ENCODE measurements at regions of chr7 and their contacts with region 1.

Region 1: GRCh38 chr7:32479574-32480200 is 10.5 kb downstream of the LSM5 start:
- DNase-seq: peak; percentile 56 to 72 (median 57)
- ATAC-seq: peak; percentile 53
- H3K4me3 ChIP-seq: no peak overlapping the region
- H3K27ac ChIP-seq: no peak overlapping the region
- H3K4me1 ChIP-seq: no peaks in the 10 kb centered on the region; a peak in 2 of 5 replicates
- H3K27me3 ChIP-seq: peaks cover 4 to 5% of the 10 kb centered on the region in 2 experiments; a peak in 2 of 5 replicates
- CTCF ChIP-seq: peak; percentile 86 to 98 (median 89)
- EP300 ChIP-seq: no peak
- POLR2A ChIP-seq: no peak
- RAD21 ChIP-seq: peak; percentile 83 to 93

Region 2: DNA sequence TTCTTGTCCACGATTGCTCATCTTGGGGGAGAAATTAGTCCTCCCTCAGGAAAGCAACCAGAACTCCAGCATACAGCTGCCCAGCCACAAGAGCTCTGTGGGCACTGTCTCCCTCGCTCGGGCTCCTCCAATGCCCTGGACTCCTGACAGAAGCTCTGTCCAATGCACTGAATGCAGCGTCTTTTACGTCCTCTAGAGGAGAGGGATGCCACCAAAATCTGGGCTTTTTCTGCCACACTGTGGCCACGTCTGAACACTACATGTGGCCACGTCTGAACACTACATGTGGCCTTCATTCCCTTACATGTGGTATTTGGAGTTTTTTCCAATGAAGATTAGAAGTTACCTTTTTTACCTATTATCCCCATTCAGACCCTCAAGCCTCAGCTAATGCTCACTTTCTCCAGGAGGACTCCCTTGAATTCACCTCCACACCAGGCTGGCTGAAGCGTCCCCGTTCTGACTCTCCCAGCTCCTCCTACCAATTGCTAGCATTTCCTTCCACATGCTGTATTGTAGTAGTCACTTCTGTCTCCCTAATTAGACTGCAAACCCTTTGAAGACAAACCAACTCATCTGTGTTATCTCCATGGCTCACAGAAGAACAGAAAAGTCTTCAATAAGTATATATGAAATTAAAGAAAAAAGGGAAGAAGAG is 275.2 kb before region 1 on chr7:
- CTCF ChIA-PET with region 1: interaction called, 20 read pairs
- POLR2A ChIA-PET with region 1: no interaction called
- in situ Hi-C with region 1: no loop called
- intact Hi-C with region 1: no loop called
- DNase-seq: peak in 1 of 4 experiments; percentile 34
- ATAC-seq: peak; percentile 84
- H3K4me3 ChIP-seq: no peak overlapping the region
- H3K27ac ChIP-seq: no peak overlapping the region
- H3K4me1 ChIP-seq: no peaks in the 10 kb centered on the region
- H3K27me3 ChIP-seq: no peaks in the 10 kb centered on the region
- CTCF ChIP-seq: peak; percentile 56 to 85 (median 62)
- EP300 ChIP-seq: no peak
- POLR2A ChIP-seq: no peak
- RAD21 ChIP-seq: peak; percentile 27 to 58; a peak in 3 of 4 replicates

Region 3: DNA sequence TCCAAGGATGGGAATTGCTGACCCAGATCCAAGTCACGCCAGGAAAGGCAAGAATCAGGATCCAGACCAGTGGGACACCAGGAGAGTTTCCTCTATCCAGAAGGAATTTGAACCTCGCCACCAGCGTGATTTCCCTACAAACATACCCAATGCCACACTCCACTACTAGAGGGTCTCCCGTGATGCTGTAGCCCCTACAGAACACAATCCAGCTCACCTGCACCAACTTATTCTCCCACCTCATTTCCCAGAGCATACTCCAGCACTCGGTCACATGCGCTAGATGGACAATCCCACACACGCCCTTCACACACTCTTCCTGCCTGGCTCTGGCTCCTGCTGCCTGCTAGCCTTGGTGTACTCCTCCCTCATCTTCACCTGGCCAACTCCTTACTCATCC is 267.4 kb before region 1 on chr7:
- CTCF ChIA-PET with region 1: interaction called, 20 read pairs
- POLR2A ChIA-PET with region 1: no interaction called
- in situ Hi-C with region 1: loop called (anchors 5 kb)
- intact Hi-C with region 1: loop called (anchors 1 kb)
- DNase-seq: no peak
- ATAC-seq: no peak
- H3K4me3 ChIP-seq: no peak overlapping the region
- H3K27ac ChIP-seq: no peak overlapping the region
- H3K4me1 ChIP-seq: no peaks in the 10 kb centered on the region
- H3K27me3 ChIP-seq: 0 out of 5 replicates have a peak, but pooled peaks cover 0 to 5% of the 10 kb centered on the region in 2 experiments
- CTCF ChIP-seq: no peak
- EP300 ChIP-seq: no peak
- POLR2A ChIP-seq: no peak
- RAD21 ChIP-seq: no peak

Region 4: GRCh38 chr7:32347244-32347828 is 132.4 kb before region 1 on chr7:
- CTCF ChIA-PET with region 1: interaction called, 5 read pairs
- POLR2A ChIA-PET with region 1: no interaction called
- in situ Hi-C with region 1: no loop called
- intact Hi-C with region 1: loop called (anchors 5 kb)
- DNase-seq: peak; percentile 41 to 47 (median 45)
- ATAC-seq: peak; percentile 72; the same call in 2 of the 3 replicates
- H3K4me3 ChIP-seq: no peak overlapping the region
- H3K27ac ChIP-seq: no peak overlapping the region
- H3K4me1 ChIP-seq: no peaks in the 10 kb centered on the region
- H3K27me3 ChIP-seq: no peaks in the 10 kb centered on the region
- CTCF ChIP-seq: peak; percentile 48 to 72 (median 70); a peak in 5 of 6 replicates
- EP300 ChIP-seq: no peak
- POLR2A ChIP-seq: no peak
- RAD21 ChIP-seq: peak; percentile 34 to 62; a peak in 3 of 4 replicates

Region 5: GRCh38 chr7:32390210-32390609 is 89.5 kb before region 1 on chr7:
- CTCF ChIA-PET with region 1: no interaction called
- POLR2A ChIA-PET with region 1: no interaction called
- in situ Hi-C with region 1: no loop called
- intact Hi-C with region 1: loop called (anchors 5 kb)
- DNase-seq: peak in 1 of 4 experiments; percentile 6
- ATAC-seq: no peak
- H3K4me3 ChIP-seq: no peak overlapping the region
- H3K27ac ChIP-seq: no peak overlapping the region
- H3K4me1 ChIP-seq: no peaks in the 10 kb centered on the region
- H3K27me3 ChIP-seq: no peaks in the 10 kb centered on the region
- CTCF ChIP-seq: peak in 2 of 3 experiments; percentile 20 to 31; a peak in 2 of 6 replicates
- EP300 ChIP-seq: no peak
- POLR2A ChIP-seq: no peak
- RAD21 ChIP-seq: no peak